Right ventricle myocardium inferior (tissue), 1 donor: ENCODE measurements at regions of chr6 and their contacts with region 1.

Region 1: GRCh38 chr6:37691904-37692806 is 5.5 kb downstream of the MDGA1 start:
- DNase-seq: peak; percentile 87
- ATAC-seq: peak; percentile 80

Region 2: DNA sequence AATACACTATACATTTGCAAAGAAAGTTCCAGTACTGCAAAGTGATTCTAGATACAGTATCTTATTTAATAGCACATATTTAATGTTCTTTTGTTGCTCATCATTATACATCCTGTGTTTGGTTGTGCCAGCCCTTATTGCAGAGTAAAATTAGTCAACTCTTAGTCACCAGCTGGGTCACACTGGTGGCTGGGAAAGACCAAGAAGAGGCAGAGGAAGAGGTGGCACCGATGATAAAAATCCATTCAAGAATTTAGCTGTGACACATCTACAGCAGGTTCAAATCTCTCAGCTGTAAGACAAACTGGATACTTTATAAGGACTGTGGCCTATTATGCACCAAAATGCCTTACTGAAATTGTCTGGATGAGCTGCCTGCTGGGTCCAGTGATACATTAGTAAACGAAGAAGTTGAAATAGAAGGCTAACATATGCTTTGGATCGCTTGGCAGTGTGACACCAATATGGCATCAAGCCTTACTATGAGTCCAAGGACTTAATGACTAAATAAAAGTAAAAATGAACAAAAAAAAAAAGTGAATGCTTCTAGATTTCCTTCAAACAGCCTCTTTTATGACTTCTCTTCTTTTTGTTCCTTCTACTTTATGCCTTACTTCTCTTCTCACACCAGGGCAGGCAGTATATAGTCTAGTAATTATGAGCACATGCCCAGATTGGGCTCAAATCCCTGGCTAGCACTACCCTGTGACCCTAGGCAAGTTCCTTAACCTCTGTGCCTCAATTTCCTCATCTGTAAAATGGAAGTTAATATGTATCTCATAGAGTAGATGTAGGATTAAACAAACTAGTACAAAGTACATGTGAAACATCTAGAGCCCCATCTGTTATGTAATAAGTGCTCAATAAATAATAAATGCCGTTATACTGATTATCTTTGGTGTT is 367.8 kb before region 1 on chr6:
- intact Hi-C with region 1: loop called (anchors 2 kb)
- DNase-seq: no peak
- ATAC-seq: no peak

Region 3: GRCh38 chr6:37381579-37381978 is 310.6 kb before region 1 on chr6:
- intact Hi-C with region 1: loop called (anchors 5 kb)
- DNase-seq: no peak
- ATAC-seq: peak; percentile 56

Region 4: DNA sequence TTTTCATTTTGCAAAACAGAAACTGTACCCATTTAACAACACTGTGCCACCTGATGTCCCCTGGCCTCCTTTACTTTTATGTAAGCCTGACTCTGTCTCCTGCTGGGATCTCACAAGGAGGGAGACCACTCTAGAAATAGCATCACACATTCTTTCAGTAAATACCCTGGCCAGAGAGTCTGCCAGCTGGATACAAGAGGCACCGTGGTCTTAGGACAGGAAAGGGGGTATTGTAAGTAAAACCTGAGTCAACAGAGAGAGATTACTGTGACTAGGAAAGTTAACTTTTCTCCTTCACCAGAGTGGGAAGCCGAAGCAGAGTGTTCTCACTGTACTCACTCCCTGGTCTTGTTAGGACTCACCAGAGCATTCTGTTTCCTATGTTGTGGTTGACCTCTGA is 231.3 kb before region 1 on chr6:
- intact Hi-C with region 1: no loop called
- DNase-seq: no peak
- ATAC-seq: peak; percentile 10

Region 5: GRCh38 chr6:37483917-37484785 is 208.0 kb before region 1 on chr6:
- intact Hi-C with region 1: loop called (anchors 1 kb)
- DNase-seq: peak; percentile 82
- ATAC-seq: peak; percentile 56

Region 6: GRCh38 chr6:37566111-37566949 is 125.8 kb before region 1 on chr6:
- intact Hi-C with region 1: loop called (anchors 10 kb)
- DNase-seq: no peak
- ATAC-seq: peak; percentile 77

Region 7: DNA sequence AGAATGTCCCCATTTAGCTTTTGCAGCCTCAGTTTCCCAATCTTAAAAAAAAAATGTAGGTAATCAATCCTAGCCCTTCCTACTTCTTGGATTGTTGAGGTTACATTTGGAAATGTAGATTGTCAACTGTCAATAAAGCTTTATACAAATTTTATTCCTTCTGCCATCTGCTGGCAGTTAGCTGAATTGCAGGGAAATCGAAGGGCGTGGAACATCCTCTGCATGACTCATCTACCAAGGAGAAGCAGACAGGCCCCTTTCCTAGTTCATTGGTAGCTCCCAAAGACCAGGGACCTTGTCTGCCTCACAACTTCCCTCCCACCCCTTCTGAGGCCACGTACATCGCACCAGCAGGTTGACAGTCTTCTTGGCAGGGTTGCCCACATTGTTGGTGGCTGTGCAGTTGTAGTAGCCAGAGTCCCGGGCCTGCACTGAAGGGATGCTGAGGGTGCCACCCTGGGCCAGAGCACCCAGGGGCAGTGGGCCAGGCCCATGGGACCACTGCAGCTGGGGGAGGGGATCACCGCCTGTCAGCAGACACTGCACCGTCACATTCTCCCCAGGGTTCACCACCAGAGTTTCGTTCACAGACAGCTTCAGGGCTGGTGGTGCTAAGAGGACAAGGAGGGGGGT is 38.1 kb before region 1 on chr6:
- intact Hi-C with region 1: loop called (anchors 2 kb)
- DNase-seq: no peak
- ATAC-seq: no peak